OCI-LY7 (cell line): ENCODE measurements at regions of chr9 and their contacts with region 1.

Region 1: DNA sequence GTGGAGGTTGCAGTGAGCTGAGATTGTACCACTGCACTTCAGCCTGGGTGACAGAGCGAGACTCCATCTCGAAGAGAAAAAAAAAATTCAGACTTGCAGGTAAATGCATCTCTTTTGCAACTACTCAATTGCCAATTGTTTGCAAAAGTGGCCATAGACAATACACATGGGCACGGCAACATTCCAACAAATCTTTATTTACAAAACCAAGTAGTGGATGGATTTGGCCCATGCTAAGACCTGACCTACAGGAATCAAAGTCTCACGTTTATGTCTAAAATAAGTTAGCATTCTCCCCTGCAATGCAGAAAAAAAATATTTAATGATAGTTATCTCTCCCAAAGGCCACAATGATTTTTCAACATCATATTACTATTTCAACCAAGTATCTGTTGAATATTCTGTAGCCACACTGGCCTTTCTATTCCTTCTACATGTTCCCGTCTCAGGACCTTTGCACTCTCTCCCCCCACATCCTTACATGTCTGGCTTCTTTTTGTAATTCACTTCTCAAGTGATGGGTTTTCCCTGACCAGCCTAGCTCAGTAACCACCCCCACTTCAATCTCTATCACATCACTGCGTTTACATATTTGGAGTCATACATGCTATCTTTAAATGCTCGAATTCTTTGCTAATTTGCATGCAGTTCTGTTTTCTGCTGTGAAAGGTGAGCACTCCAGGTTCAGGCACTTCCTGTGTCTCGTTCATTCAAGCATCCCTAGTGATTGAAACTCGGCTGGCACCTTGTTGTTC is 54.2 kb downstream of the FNBP1 start:
- DNase-seq: peak; percentile 90
- H3K4me3 ChIP-seq: peak overlapping the region; percentile 62
- H3K27ac ChIP-seq: peak overlapping the region; percentile 96
- H3K4me1 ChIP-seq: peaks cover 82% of the 10 kb centered on the region
- CTCF ChIP-seq: no peak

Region 2: DNA sequence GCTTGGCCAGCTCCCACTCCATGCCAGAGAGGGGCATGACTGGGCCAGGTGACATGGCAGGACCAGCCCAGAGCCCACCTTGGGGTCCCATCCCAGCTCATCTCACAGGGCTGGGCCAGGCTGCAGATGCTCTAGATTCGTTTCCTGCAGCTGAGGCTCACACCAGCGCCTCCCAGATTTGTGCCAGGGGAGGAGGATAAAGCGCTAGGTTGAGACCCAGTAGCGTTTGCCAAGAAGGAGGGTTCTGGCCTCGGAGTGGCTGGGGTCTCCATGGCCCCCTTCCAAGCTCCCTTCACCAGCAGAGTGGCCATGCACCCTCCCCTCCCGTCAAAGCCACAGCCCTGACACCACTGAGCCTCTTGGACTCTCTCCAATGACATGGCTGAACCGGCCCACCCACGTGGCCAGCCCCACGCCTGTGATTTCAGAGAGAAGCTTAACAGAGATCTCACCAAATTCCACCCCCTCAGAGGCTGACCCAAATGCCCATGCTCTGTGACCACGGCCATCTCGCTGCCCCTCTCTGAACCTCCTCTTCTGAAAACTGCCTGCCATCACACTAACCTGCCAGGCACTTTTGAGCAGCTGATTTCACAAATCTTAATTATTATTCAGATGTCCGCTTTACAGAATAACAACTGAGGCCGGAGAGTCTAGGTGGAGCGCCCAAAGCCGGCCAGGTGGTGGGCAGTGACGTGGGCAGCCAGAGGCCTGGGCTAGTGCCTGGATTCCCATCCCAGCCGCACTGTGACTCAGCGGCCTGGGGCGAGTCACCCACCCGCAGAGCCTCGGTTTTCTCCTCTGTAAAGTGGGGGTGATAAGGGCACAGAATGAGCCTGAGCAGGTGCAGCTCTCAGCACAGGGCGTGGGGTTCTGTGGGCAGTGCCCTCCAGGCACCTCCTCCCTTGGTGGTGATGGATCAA is 523.6 kb before region 1 on chr9:
- CTCF ChIA-PET with region 1: no interaction called
- POLR2A ChIA-PET with region 1: no interaction called
- intact Hi-C with region 1: no loop called
- DNase-seq: no peak
- H3K4me3 ChIP-seq: no peak overlapping the region
- H3K27ac ChIP-seq: no peak overlapping the region
- H3K4me1 ChIP-seq: peaks cover 4% of the 10 kb centered on the region
- CTCF ChIP-seq: no peak

Region 3: GRCh38 chr9:129702589-129703520 is 285.9 kb before region 1 on chr9:
- CTCF ChIA-PET with region 1: no interaction called
- POLR2A ChIA-PET with region 1: no interaction called
- intact Hi-C with region 1: no loop called
- DNase-seq: no peak
- H3K4me3 ChIP-seq: no peak overlapping the region
- H3K27ac ChIP-seq: no peak overlapping the region
- H3K4me1 ChIP-seq: no peaks in the 10 kb centered on the region
- CTCF ChIP-seq: no peak

Region 4: DNA sequence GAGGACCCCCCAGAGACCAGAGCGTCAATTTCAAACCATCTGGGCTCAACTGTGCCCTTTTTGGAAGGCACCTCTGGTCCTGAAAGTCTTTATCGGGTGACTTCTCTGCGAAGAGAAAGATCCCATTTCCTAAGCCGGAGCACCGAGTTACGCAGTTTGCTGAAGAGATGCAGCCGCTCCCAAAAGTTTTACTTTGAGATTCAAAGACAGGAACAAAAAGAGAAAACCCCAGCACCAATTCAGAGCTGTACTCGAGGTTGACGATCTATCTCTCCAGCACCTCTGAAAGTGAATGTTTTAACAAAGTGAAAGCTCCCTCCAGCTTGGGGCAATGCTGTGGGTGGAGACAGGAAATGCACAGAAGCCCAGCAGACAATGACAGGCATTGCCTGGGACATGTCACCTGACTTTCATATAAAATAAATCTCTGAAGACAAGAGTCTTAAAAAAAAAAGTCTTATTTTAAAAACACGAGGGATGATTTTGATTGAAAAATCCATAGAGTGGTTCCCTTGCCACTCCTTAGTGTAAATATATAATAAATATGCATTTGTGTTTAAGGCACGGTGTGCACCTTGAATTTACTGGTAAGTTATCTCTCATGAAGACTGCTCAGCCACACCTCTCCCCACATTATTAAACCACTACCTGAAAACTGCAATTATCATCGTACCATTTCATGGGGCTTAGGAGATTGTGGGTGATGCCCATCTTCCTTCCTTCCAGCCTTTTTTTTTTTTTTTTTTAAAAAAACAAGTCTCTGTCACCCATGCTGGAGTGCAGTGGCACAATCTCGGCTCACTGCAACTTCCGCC is 25.7 kb before region 1 on chr9:
- CTCF ChIA-PET with region 1: no interaction called
- POLR2A ChIA-PET with region 1: interaction called, 11 read pairs
- intact Hi-C with region 1: no loop called
- DNase-seq: peak; percentile 79
- H3K4me3 ChIP-seq: peak overlapping the region; percentile 60
- H3K27ac ChIP-seq: peak overlapping the region; percentile 74
- H3K4me1 ChIP-seq: peaks cover 37% of the 10 kb centered on the region
- CTCF ChIP-seq: no peak